Testis (tissue), 5 donors: ENCODE measurements at regions of chr2 and their contacts with region 1.

Region 1: GRCh38 chr2:149559341-149560068 is 28.1 kb downstream of the MMADHC start:
- DNase-seq: no peak
- H3K4me3 ChIP-seq: no peak overlapping the region
- H3K27ac ChIP-seq: no peak overlapping the region
- H3K4me1 ChIP-seq: no peaks in the 10 kb centered on the region
- H3K27me3 ChIP-seq: no peaks in the 10 kb centered on the region
- CTCF ChIP-seq: no peak
- POLR2A ChIP-seq: no peak

Region 2: GRCh38 chr2:149017116-149017985 is 542.2 kb before region 1 on chr2:
- intact Hi-C with region 1: loop called (anchors 5 kb)
- DNase-seq: peak; percentile 91
- H3K4me3 ChIP-seq: no peak overlapping the region
- H3K27ac ChIP-seq: no peak overlapping the region
- H3K4me1 ChIP-seq: no peaks in the 10 kb centered on the region
- H3K27me3 ChIP-seq: no peaks in the 10 kb centered on the region
- CTCF ChIP-seq: peak; percentile 69 to 87 (median 82)
- POLR2A ChIP-seq: no peak